PC-9 (cell line): ENCODE measurements at regions of chr6 and their contacts with region 1.

Region 1: DNA sequence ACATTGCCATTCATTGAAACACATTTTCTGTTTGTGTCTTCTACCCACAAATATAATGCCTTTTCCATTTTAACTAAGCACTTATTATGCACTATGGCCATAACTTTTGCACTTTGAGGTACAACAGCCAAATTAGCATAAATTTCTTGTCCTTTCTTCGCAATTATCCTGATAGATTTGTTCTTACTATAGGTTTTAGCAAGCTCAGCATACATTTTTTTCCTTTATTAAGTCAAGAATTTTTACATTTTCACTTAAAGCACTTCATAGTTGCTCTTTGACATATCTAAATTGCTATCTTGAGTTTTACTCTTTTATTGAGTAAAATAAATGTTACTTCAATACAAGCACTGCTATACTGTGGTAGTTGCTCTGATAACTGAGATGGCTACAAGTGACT is 5.8 kb downstream of the DEFB114 start:
- DNase-seq: no peak
- H3K4me3 ChIP-seq: no peak overlapping the region
- H3K27ac ChIP-seq: no peak overlapping the region
- H3K4me1 ChIP-seq: no peaks in the 10 kb centered on the region
- H3K27me3 ChIP-seq: no peaks in the 10 kb centered on the region
- CTCF ChIP-seq: no peak

Region 2: GRCh38 chr6:49995278-49995677 is 37.1 kb after region 1 on chr6:
- CTCF ChIA-PET with region 1: no interaction called
- POLR2A ChIA-PET with region 1: no interaction called
- intact Hi-C with region 1: loop called (anchors 1 kb)
- DNase-seq: no peak
- H3K4me3 ChIP-seq: no peak overlapping the region
- H3K27ac ChIP-seq: no peak overlapping the region
- H3K4me1 ChIP-seq: no peaks in the 10 kb centered on the region
- H3K27me3 ChIP-seq: no peaks in the 10 kb centered on the region
- CTCF ChIP-seq: no peak

Region 3: GRCh38 chr6:50198245-50198644 is 240.1 kb after region 1 on chr6:
- CTCF ChIA-PET with region 1: no interaction called
- POLR2A ChIA-PET with region 1: no interaction called
- intact Hi-C with region 1: no loop called
- DNase-seq: no peak
- H3K4me3 ChIP-seq: no peak overlapping the region
- H3K27ac ChIP-seq: no peak overlapping the region
- H3K4me1 ChIP-seq: no peaks in the 10 kb centered on the region
- H3K27me3 ChIP-seq: no peaks in the 10 kb centered on the region
- CTCF ChIP-seq: no peak